OCI-LY7 (cell line): ENCODE measurements at regions of chr2 and their contacts with region 1.

Region 1: GRCh38 chr2:8234757-8235374 is 447.0 kb upstream of the ID2 start:
- DNase-seq: peak; percentile 97
- H3K4me3 ChIP-seq: peak overlapping the region; percentile 41
- H3K27ac ChIP-seq: peak overlapping the region; percentile 97
- H3K4me1 ChIP-seq: peaks cover 99% of the 10 kb centered on the region
- CTCF ChIP-seq: no peak

Region 2: GRCh38 chr2:8073916-8074315 is 160.9 kb before region 1 on chr2:
- CTCF ChIA-PET with region 1: no interaction called
- POLR2A ChIA-PET with region 1: no interaction called
- intact Hi-C with region 1: no loop called
- DNase-seq: no peak
- H3K4me3 ChIP-seq: no peak overlapping the region
- H3K27ac ChIP-seq: no peak overlapping the region
- H3K4me1 ChIP-seq: no peaks in the 10 kb centered on the region
- CTCF ChIP-seq: no peak

Region 3: GRCh38 chr2:8277921-8278571 is 43.2 kb after region 1 on chr2:
- CTCF ChIA-PET with region 1: no interaction called
- POLR2A ChIA-PET with region 1: interaction called, 14 read pairs
- intact Hi-C with region 1: no loop called
- DNase-seq: peak; percentile 46
- H3K4me3 ChIP-seq: peak overlapping the region; percentile 43
- H3K27ac ChIP-seq: peak overlapping the region; percentile 22
- H3K4me1 ChIP-seq: peaks cover 19% of the 10 kb centered on the region
- CTCF ChIP-seq: no peak

Region 4: DNA sequence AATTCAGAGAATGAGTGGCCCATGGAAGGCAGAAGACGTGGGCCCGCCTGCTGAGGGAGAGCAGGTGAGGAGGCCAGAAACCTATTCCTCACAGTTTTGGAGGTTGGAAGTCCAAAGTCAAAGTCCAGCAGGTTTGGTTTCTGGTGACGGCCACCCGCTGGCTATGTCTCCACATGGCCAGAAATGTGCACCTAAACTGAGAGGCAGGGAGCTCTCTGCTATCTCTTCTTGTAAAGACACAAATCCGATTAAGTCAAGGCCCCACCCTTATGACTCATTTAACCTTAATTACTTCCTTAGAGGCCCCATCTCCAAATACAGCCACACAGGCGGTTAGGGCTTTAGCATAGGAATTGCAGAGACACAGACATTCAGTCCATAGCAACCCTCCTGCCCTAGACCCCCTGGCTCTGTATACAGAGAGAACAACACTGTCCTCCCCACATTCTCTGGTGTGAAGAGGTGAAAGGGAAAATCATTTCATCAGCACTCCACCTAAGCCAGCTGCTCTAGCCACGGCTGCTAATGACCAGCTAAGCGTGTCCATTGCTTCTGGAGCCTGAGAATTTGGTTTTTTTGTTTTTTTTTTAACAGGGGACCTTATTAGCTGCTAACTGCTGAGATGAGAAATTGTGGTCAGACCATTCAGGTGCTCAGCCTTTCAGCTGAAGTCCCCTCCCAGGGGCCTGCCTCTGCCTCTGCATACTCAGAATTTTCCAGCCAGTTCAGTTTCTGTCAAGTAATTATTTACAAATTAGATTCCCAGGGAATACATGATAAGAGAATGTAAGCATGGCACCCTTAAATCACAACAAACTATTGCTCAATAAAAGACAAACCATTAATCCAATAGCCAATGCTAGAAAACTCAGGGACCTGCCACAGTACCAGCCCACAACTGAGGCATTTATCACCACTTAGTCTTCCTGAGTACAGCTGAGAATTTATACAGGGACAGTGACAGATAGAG is 78.3 kb after region 1 on chr2:
- CTCF ChIA-PET with region 1: interaction called, 3 read pairs
- POLR2A ChIA-PET with region 1: interaction called, 5 read pairs
- intact Hi-C with region 1: loop called (anchors 2 kb)
- DNase-seq: peak; percentile 80
- H3K4me3 ChIP-seq: peak overlapping the region; percentile 14
- H3K27ac ChIP-seq: peak overlapping the region; percentile 47
- H3K4me1 ChIP-seq: peaks cover 60% of the 10 kb centered on the region
- CTCF ChIP-seq: no peak

Region 5: GRCh38 chr2:8544786-8545694 is 310.2 kb after region 1 on chr2:
- CTCF ChIA-PET with region 1: no interaction called
- POLR2A ChIA-PET with region 1: interaction called, 5 read pairs
- intact Hi-C with region 1: loop called (anchors 2 kb)
- DNase-seq: peak; percentile 95
- H3K4me3 ChIP-seq: peak overlapping the region; percentile 40
- H3K27ac ChIP-seq: peak overlapping the region; percentile 98
- H3K4me1 ChIP-seq: peaks cover 100% of the 10 kb centered on the region
- CTCF ChIP-seq: peak; percentile 81